Posterior vena cava (tissue), 2 donors: ENCODE measurements at regions of chr9 and their contacts with region 1.

Region 1: GRCh38 chr9:5886114-5886939 is 4.4 kb upstream of the MLANA start:
- DNase-seq: peak; percentile 91

Region 2: GRCh38 chr9:5920860-5921328 is 34.6 kb after region 1 on chr9:
- intact Hi-C with region 1: no loop called
- DNase-seq: no peak

Region 3: GRCh38 chr9:5939530-5939929 is 53.2 kb after region 1 on chr9:
- intact Hi-C with region 1: no loop called
- DNase-seq: no peak

Region 4: GRCh38 chr9:5958273-5958672 is 71.9 kb after region 1 on chr9:
- intact Hi-C with region 1: no loop called
- DNase-seq: no peak

Region 5: DNA sequence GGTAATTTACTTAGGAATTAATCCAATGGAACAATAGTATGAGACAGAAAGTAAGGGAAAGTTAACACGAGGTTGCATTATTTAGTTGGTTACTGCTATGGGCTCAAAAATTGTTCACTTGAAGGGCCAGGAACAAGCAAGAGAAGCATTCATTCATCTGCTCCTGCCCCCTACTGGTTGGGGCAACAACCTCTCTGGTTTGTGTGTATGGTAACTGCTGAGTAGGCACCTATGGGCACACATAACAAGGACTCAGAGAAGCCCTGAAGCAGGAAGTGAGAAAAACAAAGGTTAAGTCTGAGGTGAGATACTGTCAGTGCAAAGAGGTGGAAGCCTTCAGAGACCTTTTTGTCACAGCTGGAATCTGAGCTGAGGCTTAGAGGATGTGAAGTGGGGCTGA is 163.5 kb after region 1 on chr9:
- intact Hi-C with region 1: loop called in 1 of 2 experiments (anchors 2 kb)
- DNase-seq: no peak

Region 6: DNA sequence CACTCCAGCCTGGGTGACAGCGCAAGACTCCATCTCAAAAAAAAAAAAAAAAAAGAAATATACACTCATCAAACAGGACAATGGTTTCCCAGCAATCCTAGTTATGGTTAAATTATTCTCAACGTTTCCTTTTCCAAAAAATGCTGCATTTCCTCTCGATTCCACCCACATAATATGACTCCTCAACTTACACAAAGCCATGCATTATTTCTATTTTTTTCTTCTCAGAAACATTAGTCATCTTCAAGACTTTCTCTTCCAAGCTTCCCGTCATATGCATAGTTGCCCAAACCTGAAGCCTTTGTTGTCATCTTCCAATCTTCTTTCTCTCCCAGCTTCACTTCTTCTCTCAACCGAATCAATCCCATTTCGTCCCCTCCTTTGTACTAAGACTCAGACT is 190.5 kb after region 1 on chr9:
- intact Hi-C with region 1: no loop called
- DNase-seq: no peak

Region 7: GRCh38 chr9:6305954-6306563 is 419.7 kb after region 1 on chr9:
- intact Hi-C with region 1: loop called in 1 of 2 experiments (anchors 10 kb)
- DNase-seq: no peak